ENCODE measurements at regions of chr13 and their contacts with region 1.

Region 1: GRCh38 chr13:50081679-50082425 is 66.6 kb downstream of the KCNRG start:
- DNase-seq: peak; percentile 97 to 99 (median 98)
- ATAC-seq: peak; percentile 70
- H3K4me3 ChIP-seq: peak overlapping the region; percentile 78
- H3K4me3 Mint-ChIP-seq: peak overlapping the region; percentile 98
- H3K27ac ChIP-seq: peak overlapping the region; percentile 47 to 77
- H3K27ac Mint-ChIP-seq: peak overlapping the region; percentile 91
- H3K4me1 ChIP-seq: peaks cover 27% of the 10 kb centered on the region
- H3K4me1 Mint-ChIP-seq: peaks cover 58% of the 10 kb centered on the region
- H3K27me3 ChIP-seq: no peaks in the 10 kb centered on the region
- H3K27me3 Mint-ChIP-seq: peaks cover 24% of the 10 kb centered on the region
- CTCF ChIP-seq: no peak

Region 2: GRCh38 chr13:50069261-50069660 is 12.6 kb before region 1 on chr13:
- CTCF ChIA-PET with region 1: no interaction called
- POLR2A ChIA-PET with region 1: interaction called, 24 read pairs
- intact Hi-C with region 1: no loop called
- DNase-seq: no peak
- ATAC-seq: no peak
- H3K4me3 ChIP-seq: no peak overlapping the region
- H3K4me3 Mint-ChIP-seq: no peak overlapping the region
- H3K27ac ChIP-seq: no peak overlapping the region
- H3K27ac Mint-ChIP-seq: no peak overlapping the region
- H3K4me1 ChIP-seq: no peaks in the 10 kb centered on the region
- H3K4me1 Mint-ChIP-seq: peaks cover 13% of the 10 kb centered on the region
- H3K27me3 ChIP-seq: no peaks in the 10 kb centered on the region
- H3K27me3 Mint-ChIP-seq: peaks cover 7% of the 10 kb centered on the region
- CTCF ChIP-seq: no peak

Region 3: DNA sequence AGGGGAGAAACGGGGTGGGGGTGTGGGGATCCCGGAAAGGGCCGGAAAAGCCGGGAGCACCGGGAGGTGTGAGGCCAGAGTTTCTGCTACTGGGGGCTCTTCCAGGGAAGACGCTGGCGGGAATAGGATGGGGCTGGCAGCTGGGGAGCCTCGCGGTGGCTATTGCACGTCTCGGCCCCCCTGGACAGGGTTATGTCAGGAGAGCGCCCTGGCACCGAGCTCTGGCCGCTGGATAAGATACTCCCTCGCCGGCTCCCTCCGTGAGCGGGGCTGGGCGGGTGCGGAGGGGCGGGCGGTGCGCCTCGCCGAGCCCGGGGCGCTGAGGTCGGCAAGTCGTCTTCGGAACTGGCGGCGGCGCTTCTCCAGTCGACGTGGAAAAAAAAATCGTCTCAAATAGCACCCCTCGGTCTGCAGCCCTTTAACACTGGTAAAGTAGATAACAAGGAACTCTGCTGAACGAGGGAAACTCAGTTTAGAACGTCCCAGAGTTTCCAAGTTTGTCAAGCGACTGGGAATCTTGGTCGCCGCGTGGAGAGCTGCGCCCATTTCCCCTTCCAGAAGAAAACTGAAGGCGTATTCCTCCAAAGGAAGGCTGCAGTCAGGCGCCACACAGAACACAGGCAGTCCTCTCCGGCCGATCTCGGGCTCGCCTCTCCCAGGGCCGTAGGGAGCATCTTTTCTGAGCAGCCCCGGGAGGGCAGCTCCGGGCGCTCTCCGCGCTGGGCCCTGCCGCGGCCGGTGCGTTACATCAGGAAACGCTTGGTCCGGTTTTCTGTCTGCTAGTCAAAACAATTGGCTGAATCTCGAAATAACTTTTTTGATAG is 48.5 kb after region 1 on chr13:
- CTCF ChIA-PET with region 1: interaction called, 19 read pairs
- POLR2A ChIA-PET with region 1: interaction called, 498 read pairs
- intact Hi-C with region 1: loop called (anchors 1 kb)
- DNase-seq: peak in 8 of 14 experiments; percentile 18 to 69 (median 38)
- ATAC-seq: peak; percentile 2
- H3K4me3 ChIP-seq: peak overlapping the region; percentile 53
- H3K4me3 Mint-ChIP-seq: peak overlapping the region; percentile 91
- H3K27ac ChIP-seq: peak overlapping the region in 1 of 2 donors; percentile 13
- H3K27ac Mint-ChIP-seq: peak overlapping the region; percentile 94
- H3K4me1 ChIP-seq: peaks cover 71% of the 10 kb centered on the region
- H3K4me1 Mint-ChIP-seq: peaks cover 59% of the 10 kb centered on the region
- H3K27me3 ChIP-seq: peaks cover 62 to 64% of the 10 kb centered on the region in 2 experiments
- H3K27me3 Mint-ChIP-seq: peaks cover 84% of the 10 kb centered on the region
- CTCF ChIP-seq: no peak

Region 4: DNA sequence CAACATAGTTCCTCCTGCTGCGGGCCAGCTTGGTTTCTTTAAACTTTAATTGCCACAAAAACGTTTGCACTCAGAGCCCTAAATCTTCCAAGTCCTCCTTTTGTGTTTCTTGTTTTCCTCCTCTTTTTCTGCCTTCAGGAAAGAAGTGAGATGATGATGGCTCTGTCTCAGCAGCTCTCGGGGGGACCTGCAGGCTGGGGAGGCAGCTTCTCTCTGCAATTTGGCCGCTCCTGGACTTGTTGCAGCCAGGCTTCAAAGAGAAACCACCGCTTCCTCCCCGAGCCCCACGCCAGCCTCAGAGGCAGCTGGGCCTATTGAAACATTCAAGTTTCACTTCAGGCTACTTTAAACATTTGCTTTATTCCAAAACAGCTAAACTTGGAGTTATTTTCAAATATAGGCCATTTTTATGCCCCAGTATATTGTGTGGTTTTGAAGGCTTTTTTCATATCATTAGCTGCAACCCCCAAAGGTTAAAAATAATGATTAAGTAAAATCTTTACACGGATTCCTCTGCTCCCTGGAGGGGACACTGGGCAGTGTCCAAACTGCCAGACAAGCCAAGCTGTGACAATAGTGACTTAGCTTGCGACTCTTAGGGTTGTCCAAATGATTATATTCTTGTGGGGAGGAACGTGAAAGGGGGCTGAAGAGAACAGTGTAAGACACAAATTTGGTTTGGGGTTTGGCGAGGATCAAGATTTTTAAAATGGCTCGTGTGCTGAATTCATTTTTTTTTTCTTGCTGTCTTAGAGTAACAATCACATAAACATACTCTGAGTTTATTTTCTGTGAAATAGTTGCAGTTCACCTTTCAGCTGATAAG is 430.8 kb after region 1 on chr13:
- CTCF ChIA-PET with region 1: no interaction called
- POLR2A ChIA-PET with region 1: no interaction called
- intact Hi-C with region 1: loop called in 1 of 2 experiments (anchors 10 kb)
- DNase-seq: peak in 13 of 14 experiments; percentile 10 to 74 (median 33)
- ATAC-seq: peak; percentile 63
- H3K4me3 ChIP-seq: peak overlapping the region; percentile 52
- H3K4me3 Mint-ChIP-seq: no peak overlapping the region
- H3K27ac ChIP-seq: peak overlapping the region in 1 of 2 donors; percentile 61
- H3K27ac Mint-ChIP-seq: no peak overlapping the region
- H3K4me1 ChIP-seq: peaks cover 23% of the 10 kb centered on the region
- H3K4me1 Mint-ChIP-seq: no peaks in the 10 kb centered on the region
- H3K27me3 ChIP-seq: no peaks in the 10 kb centered on the region
- H3K27me3 Mint-ChIP-seq: no peaks in the 10 kb centered on the region
- CTCF ChIP-seq: no peak

Region 5: DNA sequence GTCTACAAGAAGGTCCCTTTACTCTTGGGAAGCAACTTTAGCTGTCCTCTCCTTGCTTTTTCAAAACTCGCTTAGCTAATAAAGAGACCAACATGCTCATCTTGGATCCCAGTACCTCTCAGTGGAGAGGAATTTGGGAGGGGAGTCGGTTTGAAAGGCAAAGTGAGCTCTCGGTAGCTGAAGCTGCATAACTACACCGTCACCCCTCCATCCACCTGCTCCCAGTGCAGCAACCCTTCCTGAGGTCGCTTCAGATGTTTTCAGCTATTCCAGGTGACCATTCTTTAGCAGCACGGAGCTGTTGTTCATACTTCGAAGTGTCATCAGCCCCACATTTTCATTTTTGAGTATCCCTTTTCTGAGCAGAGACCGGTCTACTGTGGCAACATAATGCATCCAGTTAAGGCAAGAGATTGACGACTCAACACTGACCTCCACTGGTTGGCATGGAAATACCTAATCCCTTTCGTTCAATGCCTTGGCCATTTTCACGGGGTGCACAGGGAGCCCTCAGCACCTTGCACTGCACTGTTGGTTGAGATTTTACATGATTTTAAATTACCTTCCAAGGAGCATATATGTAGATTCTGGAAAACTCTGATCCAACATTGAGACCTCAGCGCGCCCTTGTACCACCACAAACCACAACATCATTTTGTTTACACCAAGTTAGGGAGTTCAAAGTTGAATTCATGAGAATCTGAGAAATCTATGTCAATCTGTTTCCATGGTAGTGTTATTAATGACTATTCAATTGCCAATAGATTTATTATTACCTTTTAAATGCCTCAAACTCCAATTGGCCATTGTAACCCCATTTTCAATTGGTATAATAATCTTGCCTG is 719.5 kb after region 1 on chr13:
- CTCF ChIA-PET with region 1: no interaction called
- POLR2A ChIA-PET with region 1: no interaction called
- intact Hi-C with region 1: loop called (anchors 2 to 5 kb)
- DNase-seq: peak; percentile 19 to 85 (median 48)
- ATAC-seq: peak; percentile 88
- H3K4me3 ChIP-seq: no peak overlapping the region
- H3K4me3 Mint-ChIP-seq: no peak overlapping the region
- H3K27ac ChIP-seq: no peak overlapping the region
- H3K27ac Mint-ChIP-seq: no peak overlapping the region
- H3K4me1 ChIP-seq: peaks cover 6% of the 10 kb centered on the region
- H3K4me1 Mint-ChIP-seq: peaks cover 7% of the 10 kb centered on the region
- H3K27me3 ChIP-seq: no peaks in the 10 kb centered on the region
- H3K27me3 Mint-ChIP-seq: no peaks in the 10 kb centered on the region
- CTCF ChIP-seq: peak; percentile 75

Region 6: GRCh38 chr13:51034906-51035305 is 953.1 kb after region 1 on chr13:
- CTCF ChIA-PET with region 1: no interaction called
- POLR2A ChIA-PET with region 1: no interaction called
- intact Hi-C with region 1: no loop called
- DNase-seq: no peak
- ATAC-seq: no peak
- H3K4me3 ChIP-seq: no peak overlapping the region
- H3K4me3 Mint-ChIP-seq: no peak overlapping the region
- H3K27ac ChIP-seq: no peak overlapping the region
- H3K27ac Mint-ChIP-seq: no peak overlapping the region
- H3K4me1 ChIP-seq: no peaks in the 10 kb centered on the region
- H3K4me1 Mint-ChIP-seq: no peaks in the 10 kb centered on the region
- H3K27me3 ChIP-seq: no peaks in the 10 kb centered on the region
- H3K27me3 Mint-ChIP-seq: no peaks in the 10 kb centered on the region
- CTCF ChIP-seq: no peak